Mucosa of descending colon (tissue), 3 donors: ENCODE measurements at regions of chr17 and their contacts with region 1.

Region 1: DNA sequence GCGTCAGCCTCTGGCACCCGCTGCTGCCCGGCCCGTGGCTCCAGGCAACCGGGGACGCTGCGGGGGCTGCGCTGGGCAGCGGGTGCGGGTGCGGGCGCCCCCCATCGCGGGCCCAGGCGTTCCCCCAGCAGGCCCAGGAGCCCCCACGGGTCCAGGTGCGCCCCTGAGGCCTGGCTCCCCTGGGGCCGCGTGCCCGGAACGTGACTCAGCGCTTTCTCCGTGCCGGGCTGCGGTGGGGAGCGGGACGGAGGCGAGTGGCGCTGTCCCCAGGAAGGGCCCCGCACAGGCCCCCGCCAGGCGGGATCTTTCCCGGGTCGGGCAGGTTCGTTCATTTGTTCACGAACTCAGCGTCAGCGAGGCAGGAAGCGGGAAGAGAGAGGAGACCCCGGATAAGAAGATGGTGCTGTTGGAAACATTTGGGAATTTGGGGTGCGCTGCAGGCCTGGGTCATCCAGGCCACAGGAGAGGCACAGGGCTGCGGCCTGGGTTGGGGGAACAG is 18.4 kb upstream of the EXOC7 start:
- DNase-seq: no peak
- ATAC-seq: peak; percentile 13
- H3K4me3 ChIP-seq: no peak overlapping the region
- H3K4me1 ChIP-seq: no peaks in the 10 kb centered on the region
- CTCF ChIP-seq: no peak

Region 2: GRCh38 chr17:76182016-76182764 is 60.2 kb after region 1 on chr17:
- intact Hi-C with region 1: loop called (anchors 5 to 10 kb)
- DNase-seq: peak; percentile 88 to 98 (median 95)
- ATAC-seq: peak; percentile 97
- H3K4me3 ChIP-seq: no peak overlapping the region
- H3K4me1 ChIP-seq: no peaks in the 10 kb centered on the region
- CTCF ChIP-seq: peak; percentile 77

Region 3: DNA sequence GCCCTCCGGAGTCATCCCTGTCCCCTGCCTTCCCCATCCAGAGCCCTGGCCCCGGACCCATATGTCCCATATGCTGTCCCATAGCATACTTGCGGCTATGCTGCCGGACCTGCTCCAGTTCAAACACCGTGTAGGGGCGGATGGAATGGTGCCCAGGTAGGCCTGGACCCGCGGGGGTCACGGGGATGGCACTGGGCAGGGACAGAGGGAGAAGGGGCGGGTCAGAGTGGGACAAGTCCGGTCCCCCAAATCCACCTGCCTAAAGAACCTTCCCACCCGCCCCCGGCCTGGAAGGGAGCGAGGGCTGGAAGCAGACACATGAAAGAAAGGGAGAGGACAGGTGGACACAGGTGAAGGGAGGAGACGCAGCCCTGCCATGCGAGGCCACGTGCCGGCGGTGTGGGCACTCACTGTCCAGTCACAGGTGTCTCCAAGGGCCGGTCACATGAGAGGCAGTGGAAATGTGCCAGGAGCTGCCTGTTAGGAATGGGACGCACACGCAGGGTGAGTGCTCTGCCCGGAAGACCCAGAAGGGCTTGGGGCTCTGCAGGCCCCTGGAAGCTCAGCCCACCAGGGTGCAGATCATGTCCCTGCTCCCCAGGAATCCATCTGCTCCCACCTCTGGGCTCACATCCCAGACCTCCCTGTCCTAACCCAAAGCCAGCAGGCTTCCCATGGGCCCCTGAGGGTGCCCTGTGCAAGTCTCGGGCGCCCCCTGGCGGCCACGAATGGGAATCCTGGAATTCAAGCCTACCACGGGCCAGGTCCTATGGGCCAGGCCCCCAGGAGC is 157.2 kb after region 1 on chr17:
- intact Hi-C with region 1: loop called in 1 of 2 experiments (anchors 5 kb)
- DNase-seq: peak; percentile 88 to 94 (median 91)
- ATAC-seq: peak; percentile 92
- H3K4me3 ChIP-seq: no peak overlapping the region
- H3K4me1 ChIP-seq: peaks cover 9% of the 10 kb centered on the region
- CTCF ChIP-seq: peak; percentile 81

Region 4: GRCh38 chr17:76296186-76296585 is 174.2 kb after region 1 on chr17:
- intact Hi-C with region 1: loop called in 1 of 2 experiments (anchors 5 kb)
- DNase-seq: no peak
- ATAC-seq: peak; percentile 45
- H3K4me3 ChIP-seq: no peak overlapping the region
- H3K4me1 ChIP-seq: peaks cover 14% of the 10 kb centered on the region
- CTCF ChIP-seq: no peak